Sigmoid colon (tissue), 7 donors: ENCODE measurements at regions of chr13 and their contacts with region 1.

Region 1: DNA sequence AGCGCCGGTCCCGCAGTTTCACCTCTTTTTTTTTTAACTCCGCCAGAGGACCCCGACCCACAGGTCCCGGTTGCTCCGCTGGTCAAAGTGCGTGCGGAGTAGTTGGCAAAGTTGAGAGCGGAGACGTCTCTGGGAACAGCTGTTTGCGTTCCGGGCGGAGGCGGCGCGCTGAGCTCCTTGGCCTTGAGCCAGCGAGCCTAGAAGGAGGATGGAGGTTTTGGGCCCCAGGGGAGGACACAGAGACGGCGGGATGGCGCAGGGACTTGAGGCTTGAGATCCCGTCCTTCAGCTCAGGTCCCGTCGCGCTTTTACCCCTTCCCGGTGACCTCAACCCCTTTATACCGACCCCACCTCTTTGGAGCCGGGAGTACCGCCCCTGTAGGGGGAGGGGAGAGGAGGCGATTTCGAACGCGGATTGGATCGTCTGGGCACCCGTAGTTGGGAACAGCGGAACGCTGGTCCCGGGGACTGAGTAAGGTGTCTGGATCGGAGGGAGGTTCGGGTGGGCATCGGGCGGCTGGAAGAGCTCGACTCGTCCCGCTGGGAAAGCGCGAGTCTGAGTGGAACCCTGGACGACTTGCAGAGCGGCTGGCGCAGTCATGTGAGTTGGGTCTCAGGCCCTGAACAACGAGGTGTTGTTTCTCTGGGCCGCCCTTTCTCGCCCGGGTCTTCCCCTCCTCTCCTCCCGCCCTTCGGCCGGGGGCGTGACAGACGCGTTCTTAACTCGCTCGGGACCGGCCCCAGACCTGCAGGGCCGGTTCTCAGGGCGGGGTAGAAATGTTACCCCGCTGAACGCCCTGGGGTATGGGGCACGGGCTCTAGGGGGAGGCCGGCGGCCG is at the start of gene WBP4:
- DNase-seq: peak; percentile 97
- H3K4me3 ChIP-seq: peak within 1 kb of the TSS; percentile 61 to 93 (median 80)
- H3K27ac ChIP-seq: peak within 1 kb of the TSS; percentile 91 to 99 (median 98)
- H3K4me1 ChIP-seq: peaks cover 0 to 76% (median 67%) of the 10 kb centered on the region in 4 donors
- H3K27me3 ChIP-seq: no peaks in the 10 kb centered on the region
- CTCF ChIP-seq: no peak
- EP300 ChIP-seq: peak in 2 of 4 donors; percentile 52 to 64
- POLR2A ChIP-seq: peak; percentile 43 to 66
- total RNA-seq, gene WBP4: 11.6 to 25.0 (median 18.4) TPM

Region 2: DNA sequence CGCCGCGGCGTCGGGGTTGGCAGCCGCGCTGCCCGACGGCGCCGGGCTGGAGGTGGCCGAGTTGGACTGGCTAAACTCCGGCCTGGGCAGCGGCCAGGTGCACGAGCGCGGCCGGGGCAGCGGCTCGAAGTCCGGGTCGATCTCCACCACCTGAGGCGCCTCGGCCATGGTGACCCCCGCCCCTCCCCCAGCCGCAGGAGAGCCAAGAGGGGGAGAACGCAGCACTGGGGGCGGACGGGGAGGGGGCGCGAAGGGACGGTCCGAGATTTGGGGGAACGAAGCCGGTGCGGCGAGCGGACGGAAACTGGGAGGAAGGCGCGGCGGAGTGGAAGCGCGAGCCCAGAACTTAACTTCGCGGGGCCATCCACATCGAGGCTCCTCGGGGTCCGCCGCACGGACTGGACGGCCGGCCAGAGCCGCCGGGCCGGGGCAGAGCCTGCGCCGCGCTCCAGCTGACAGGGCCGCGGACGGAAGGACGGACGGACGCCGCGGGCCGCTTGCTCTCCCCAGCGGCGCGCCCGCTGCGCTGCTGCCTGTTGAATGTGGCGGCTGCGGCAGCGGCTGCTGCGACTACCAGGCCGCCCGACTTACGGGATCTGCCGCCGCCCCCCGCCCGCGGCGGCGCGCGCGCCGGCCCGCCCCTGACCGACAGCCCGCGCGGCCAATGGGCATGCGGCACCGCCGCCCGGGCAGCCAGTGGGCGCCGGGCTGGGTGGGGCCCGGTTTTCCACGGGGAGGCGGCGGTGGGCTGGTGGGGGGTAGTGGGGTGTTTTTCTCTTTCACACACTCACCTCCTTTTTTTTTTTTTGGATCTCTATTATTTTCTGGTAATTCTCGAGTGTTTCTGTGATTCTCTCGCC is 395.0 kb before region 1 on chr13 and contains the start of gene FOXO1:
- intact Hi-C with region 1: loop called (anchors 5 kb)
- DNase-seq: peak; percentile 94
- H3K4me3 ChIP-seq: peak within 1 kb of the TSS; percentile 74 to 93 (median 86)
- H3K27ac ChIP-seq: peak within 1 kb of the TSS; percentile 93 to 99 (median 98)
- H3K4me1 ChIP-seq: peaks cover 0 to 31% (median 25%) of the 10 kb centered on the region in 4 donors
- H3K27me3 ChIP-seq: no peaks in the 10 kb centered on the region
- CTCF ChIP-seq: no peak
- EP300 ChIP-seq: no peak
- POLR2A ChIP-seq: peak; percentile 14 to 24
- total RNA-seq, gene FOXO1: 30.9 to 36.8 (median 33.7) TPM

Region 3: GRCh38 chr13:40922437-40923040 is 138.8 kb before region 1 on chr13:
- intact Hi-C with region 1: loop called (anchors 5 kb)
- DNase-seq: no peak
- H3K4me3 ChIP-seq: no peak overlapping the region
- H3K27ac ChIP-seq: no peak overlapping the region
- H3K4me1 ChIP-seq: peaks cover 0 to 13% (median 8%) of the 10 kb centered on the region in 4 donors
- H3K27me3 ChIP-seq: no peaks in the 10 kb centered on the region
- CTCF ChIP-seq: no peak
- EP300 ChIP-seq: no peak
- POLR2A ChIP-seq: no peak

Region 4: GRCh38 chr13:41111454-41111853 is 50.2 kb after region 1 on chr13:
- intact Hi-C with region 1: no loop called
- DNase-seq: no peak
- H3K4me3 ChIP-seq: no peak overlapping the region
- H3K27ac ChIP-seq: no peak overlapping the region
- H3K4me1 ChIP-seq: peaks cover 0 to 2% (median 0%) of the 10 kb centered on the region in 4 donors
- H3K27me3 ChIP-seq: no peaks in the 10 kb centered on the region
- CTCF ChIP-seq: no peak
- EP300 ChIP-seq: no peak
- POLR2A ChIP-seq: no peak

Region 5: GRCh38 chr13:41193919-41194824 is 132.9 kb after region 1 on chr13 and contains the start of gene KBTBD7:
- intact Hi-C with region 1: loop called (anchors 5 kb)
- DNase-seq: peak; percentile 97
- H3K4me3 ChIP-seq: peak within 1 kb of the TSS; percentile 53 to 80 (median 68)
- H3K27ac ChIP-seq: peak within 1 kb of the TSS; percentile 82 to 92 (median 86)
- H3K4me1 ChIP-seq: peaks cover 0 to 34% (median 24%) of the 10 kb centered on the region in 4 donors
- H3K27me3 ChIP-seq: no peaks in the 10 kb centered on the region
- CTCF ChIP-seq: no peak
- EP300 ChIP-seq: peak in 1 of 4 donors; percentile 32
- POLR2A ChIP-seq: peak; percentile 32 to 38
- total RNA-seq, gene KBTBD7: 5.6 to 10.2 (median 8.0) TPM

Region 6: DNA sequence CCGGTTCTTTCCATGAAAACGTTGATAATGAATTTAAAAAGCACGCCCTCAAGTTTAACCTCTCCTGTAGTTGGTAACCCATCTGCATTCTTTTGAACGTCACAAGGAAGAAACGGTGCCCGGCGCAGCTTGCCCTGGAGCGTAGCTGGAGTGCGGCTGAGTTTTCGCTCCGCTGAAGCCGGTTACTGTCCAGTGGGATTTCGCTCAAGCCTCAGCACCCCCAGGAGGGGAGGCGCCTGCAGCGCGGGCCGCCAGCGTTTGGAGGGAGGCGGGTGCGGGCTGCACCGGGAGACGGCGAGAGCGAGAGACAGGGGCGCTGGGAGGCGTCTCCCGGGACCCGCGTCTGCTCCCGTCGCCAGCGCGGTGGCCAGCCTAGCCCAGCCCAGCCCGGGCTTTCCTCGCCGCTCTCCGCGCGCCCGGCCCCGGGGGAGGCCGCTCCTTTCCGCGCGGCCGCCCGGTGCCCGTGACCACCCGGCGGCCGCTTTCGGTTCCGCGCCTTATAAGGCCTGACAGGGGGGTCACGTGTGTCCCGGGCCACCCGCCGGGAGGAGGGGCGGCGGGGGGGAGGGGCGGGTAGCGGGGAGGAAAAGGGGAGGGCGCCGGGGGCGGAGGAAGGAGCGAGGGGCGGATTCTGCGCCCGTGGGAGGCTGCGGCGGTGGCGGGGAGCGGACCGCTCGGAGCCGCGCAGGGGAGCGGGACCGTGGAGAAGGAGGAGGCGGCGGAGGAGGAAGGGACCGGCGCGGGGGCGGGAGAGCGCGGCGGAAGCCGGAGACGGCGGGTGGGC is 978.8 kb after region 1 on chr13:
- intact Hi-C with region 1: loop called (anchors 10 kb)
- DNase-seq: peak; percentile 97
- H3K4me3 ChIP-seq: peak overlapping the region; percentile 71 to 89 (median 86)
- H3K27ac ChIP-seq: peak overlapping the region; percentile 95 to 99 (median 99)
- H3K4me1 ChIP-seq: peaks cover 0 to 19% (median 12%) of the 10 kb centered on the region in 4 donors
- H3K27me3 ChIP-seq: no peaks in the 10 kb centered on the region
- CTCF ChIP-seq: no peak
- EP300 ChIP-seq: no peak
- POLR2A ChIP-seq: peak; percentile 18 to 28